ENCODE measurements at regions of chr21 and their contacts with region 1.

Region 1: GRCh38 chr21:45820171-45821091 is 161.1 kb upstream of the COL6A1 start:
- DNase-seq: peak; percentile 88 to 94 (median 93)
- H3K4me3 ChIP-seq: no peak overlapping the region
- H3K27ac ChIP-seq: no peak overlapping the region
- H3K4me1 ChIP-seq: no peaks in the 10 kb centered on the region
- H3K27me3 ChIP-seq: no peaks in the 10 kb centered on the region
- CTCF ChIP-seq: peak; percentile 79

Region 2: GRCh38 chr21:45554477-45555175 is 265.8 kb before region 1 on chr21:
- intact Hi-C with region 1: loop called (anchors 5 kb)
- DNase-seq: peak; percentile 84 to 94 (median 89)
- H3K4me3 ChIP-seq: peak overlapping the region; percentile 68 to 86 (median 82)
- H3K27ac ChIP-seq: peak overlapping the region; percentile 63 to 81
- H3K4me1 ChIP-seq: peaks cover 0 to 2% (median 0%) of the 10 kb centered on the region in 3 donors
- H3K27me3 ChIP-seq: no peaks in the 10 kb centered on the region
- CTCF ChIP-seq: peak; percentile 82

Region 3: DNA sequence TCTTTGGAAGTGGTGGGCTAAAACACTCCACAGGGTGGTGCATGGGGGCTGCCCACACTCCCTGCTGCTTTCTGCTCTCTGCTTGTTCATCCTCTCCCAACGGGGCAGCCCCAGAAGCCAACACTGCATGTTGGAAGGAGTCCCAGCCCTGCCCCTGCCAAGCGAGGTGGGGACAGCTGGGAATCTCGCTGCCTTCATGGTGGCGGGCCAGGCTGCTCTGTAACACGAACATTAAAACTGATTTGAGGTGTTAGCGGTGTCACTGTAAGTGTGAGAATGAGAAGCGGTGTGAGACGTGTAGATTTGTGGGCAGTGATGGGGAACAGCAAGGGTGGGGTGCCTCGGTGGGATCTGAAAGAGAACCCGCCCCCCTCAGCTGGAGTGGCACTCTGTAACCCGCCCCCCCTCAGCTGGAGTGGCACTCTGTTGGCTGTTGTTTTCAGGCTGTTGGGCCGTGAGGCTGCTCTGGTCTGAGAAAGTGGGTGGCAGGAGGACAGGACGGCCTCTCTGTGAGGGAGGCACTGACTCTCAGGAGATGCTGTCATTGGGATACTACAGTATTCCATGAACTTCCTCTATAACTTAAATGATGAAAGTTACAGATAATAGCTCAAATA is 96.0 kb before region 1 on chr21:
- intact Hi-C with region 1: no loop called
- DNase-seq: peak in 4 of 5 donors; percentile 10 to 46 (median 18)
- H3K4me3 ChIP-seq: no peak overlapping the region
- H3K27ac ChIP-seq: no peak overlapping the region
- H3K4me1 ChIP-seq: no peaks in the 10 kb centered on the region
- H3K27me3 ChIP-seq: no peaks in the 10 kb centered on the region
- CTCF ChIP-seq: no peak

Measured in kidney (tissue), 22 donors.